GM18951 (cell line): ENCODE measurements at regions of chrX and their contacts with region 1.

Region 1: DNA sequence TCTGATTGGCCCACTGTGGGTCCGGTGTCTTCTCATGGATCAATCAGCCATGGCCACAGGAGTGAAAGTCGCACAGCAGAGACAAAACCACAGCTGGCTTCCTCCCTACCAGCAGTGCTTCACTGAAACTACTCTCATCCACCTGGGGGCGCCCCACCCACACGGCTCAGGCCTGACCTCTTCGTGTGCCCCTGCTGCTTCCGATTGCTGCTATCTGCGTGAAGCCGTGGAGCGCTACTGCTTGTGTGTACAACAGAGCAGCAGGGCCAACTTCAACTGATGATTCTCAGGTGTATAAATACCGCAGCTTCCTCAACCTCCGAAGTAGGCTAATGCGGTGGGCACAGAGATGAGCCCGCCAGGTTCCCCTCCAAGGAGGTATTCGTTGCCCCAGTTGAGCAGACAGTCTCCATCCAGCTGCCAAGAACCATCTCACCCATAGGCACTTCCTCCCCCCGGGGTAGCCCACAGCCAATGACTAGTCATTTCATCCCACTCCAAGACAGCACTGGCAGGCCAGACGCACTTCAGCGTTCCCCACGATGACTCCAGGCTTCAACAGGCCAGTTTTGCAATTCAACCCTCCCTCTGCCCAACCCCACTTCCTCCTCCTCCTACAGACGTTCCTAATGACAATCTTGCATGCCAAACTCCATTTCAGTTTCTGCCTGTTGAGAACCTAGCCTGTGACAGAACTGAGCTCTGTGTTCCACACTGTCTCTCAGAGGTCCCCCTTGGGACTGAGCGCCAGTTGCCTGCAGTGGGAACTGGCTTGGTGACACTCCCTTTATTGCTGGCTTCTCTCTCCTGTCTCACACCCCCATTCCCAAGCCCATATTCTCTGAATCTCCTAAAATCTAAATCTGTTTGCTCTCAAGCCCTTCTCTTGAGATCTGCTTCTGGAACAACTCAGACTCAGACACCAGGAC is 41.3 kb upstream of the ATP6AP2 start:
- POLR2A ChIP-seq: no peak

Region 2: DNA sequence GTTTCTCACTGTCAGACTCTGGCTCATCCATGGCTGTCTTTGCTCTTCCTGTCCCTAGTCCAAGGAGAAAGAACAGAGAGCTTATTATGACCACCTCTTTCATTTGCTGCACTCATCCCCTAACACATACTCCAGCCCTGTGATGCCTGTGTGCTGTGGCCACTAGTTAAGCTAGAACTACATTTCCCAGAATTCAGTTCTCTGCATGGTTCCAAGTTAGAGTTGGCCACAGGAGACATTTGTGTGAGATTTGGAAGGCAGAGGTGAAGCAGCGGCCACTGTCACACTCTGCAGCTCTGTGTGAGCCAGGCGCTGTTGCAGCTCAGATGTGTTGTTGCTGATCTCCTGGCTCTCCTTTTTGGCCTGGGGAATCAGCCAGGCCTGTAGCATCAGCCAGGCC is 146.9 kb before region 1 on chrX:
- in situ Hi-C with region 1: no loop called
- POLR2A ChIP-seq: no peak

Region 3: DNA sequence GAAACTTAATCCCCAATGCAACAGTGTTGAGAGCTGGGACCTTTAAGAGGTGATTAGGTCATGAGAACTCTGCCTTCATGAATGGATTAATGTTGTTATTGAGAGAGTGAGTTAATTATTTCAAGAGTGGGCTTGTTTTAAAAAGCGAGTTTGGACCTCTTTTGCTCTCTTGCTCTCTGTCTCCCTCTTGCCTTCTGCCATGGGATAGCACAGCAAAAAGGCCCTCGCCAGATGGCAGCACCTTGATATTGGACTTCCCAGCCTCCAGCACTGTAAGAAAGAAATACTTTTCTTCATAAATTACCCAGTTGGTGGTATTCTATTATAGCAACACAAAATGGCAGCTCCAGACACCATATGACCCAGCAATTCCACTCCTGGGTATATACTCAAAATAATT is 34.3 kb after region 1 on chrX:
- in situ Hi-C with region 1: no loop called
- POLR2A ChIP-seq: no peak

Region 4: DNA sequence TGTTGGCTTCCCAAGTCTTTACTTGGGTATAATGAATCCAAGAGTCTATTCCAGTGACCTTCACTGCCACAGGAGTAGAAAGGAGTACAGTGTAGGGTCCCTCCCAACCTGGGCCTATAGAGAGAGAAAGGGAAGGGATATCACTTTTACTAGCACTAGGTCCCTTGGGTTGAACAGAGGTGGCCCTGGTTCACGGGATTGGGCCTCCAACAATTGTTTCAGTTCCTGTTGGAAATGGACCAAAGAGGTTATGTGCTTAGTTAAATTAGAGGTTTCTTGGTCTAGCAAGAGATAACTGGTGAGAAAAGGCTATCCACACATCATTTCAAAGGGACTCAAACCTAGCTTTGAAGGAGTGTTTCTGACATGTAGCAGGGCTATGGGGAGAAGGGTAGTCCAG is 253.0 kb after region 1 on chrX:
- in situ Hi-C with region 1: loop called (anchors 10 kb)
- POLR2A ChIP-seq: no peak

Region 5: GRCh38 chrX:40845331-40845911 is 305.9 kb after region 1 on chrX:
- in situ Hi-C with region 1: no loop called
- POLR2A ChIP-seq: no peak

Region 6: DNA sequence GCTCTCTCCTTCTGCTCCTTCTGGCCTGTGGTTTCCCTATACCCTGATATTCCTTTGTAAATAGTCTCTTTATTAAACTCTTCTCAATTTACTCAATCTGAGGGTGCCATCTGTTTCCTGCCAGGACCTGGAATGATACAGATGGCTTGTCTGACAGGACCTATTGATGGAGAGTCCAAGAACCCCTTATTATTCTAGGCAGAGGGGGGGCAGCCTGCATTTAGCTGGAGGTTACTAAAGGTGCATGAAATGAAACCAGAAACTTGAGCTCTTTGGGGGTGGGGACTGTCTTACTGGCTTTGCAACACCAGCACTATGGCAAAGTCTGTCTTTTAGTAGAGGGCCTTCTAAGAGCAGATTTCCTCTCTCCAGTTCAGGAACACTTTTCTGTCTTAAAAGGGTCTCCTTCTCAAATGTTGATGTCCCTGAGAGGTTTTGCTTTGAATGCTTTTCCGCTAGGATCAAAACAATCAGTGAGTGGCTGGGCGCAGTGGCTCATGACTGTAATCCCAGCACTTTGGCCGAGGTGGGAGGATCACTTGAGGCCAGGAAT is 358.3 kb after region 1 on chrX:
- in situ Hi-C with region 1: no loop called
- POLR2A ChIP-seq: no peak